PC-9 (cell line): ENCODE measurements at regions of chr1 and their contacts with region 1.

Region 1: GRCh38 chr1:44553771-44554170 is 120.5 kb downstream of the TMEM53 start:
- DNase-seq: peak; percentile 77 to 84
- H3K4me3 ChIP-seq: no peak overlapping the region; the same call in 1 of the 2 replicates
- H3K27ac ChIP-seq: peak overlapping the region; percentile 68
- H3K4me1 ChIP-seq: peaks cover 35% of the 10 kb centered on the region
- H3K27me3 ChIP-seq: no peaks in the 10 kb centered on the region
- CTCF ChIP-seq: no peak

Region 2: GRCh38 chr1:44327679-44328491 is 225.9 kb before region 1 on chr1:
- CTCF ChIA-PET with region 1: interaction called, 3 read pairs
- POLR2A ChIA-PET with region 1: no interaction called
- intact Hi-C with region 1: loop called (anchors 5 kb)
- DNase-seq: peak; percentile 99
- H3K4me3 ChIP-seq: no peak overlapping the region
- H3K27ac ChIP-seq: peak overlapping the region; percentile 72
- H3K4me1 ChIP-seq: peaks cover 45% of the 10 kb centered on the region
- H3K27me3 ChIP-seq: no peaks in the 10 kb centered on the region
- CTCF ChIP-seq: no peak

Region 3: GRCh38 chr1:44354840-44355581 is 198.8 kb before region 1 on chr1 and contains the start of gene ERI3:
- CTCF ChIA-PET with region 1: no interaction called
- POLR2A ChIA-PET with region 1: no interaction called
- intact Hi-C with region 1: no loop called
- DNase-seq: peak; percentile 92 to 98
- H3K4me3 ChIP-seq: peak within 1 kb of the TSS; percentile 99
- H3K27ac ChIP-seq: 0 out of 2 replicates have a peak within 1 kb of the TSS, but pooled peaks have one; percentile 40
- H3K4me1 ChIP-seq: peaks cover 26% of the 10 kb centered on the region; the same call in 1 of the 2 replicates
- H3K27me3 ChIP-seq: no peaks in the 10 kb centered on the region
- CTCF ChIP-seq: no peak
- total RNA-seq, gene ERI3: 120 and 133 TPM in 2 replicates

Region 4: DNA sequence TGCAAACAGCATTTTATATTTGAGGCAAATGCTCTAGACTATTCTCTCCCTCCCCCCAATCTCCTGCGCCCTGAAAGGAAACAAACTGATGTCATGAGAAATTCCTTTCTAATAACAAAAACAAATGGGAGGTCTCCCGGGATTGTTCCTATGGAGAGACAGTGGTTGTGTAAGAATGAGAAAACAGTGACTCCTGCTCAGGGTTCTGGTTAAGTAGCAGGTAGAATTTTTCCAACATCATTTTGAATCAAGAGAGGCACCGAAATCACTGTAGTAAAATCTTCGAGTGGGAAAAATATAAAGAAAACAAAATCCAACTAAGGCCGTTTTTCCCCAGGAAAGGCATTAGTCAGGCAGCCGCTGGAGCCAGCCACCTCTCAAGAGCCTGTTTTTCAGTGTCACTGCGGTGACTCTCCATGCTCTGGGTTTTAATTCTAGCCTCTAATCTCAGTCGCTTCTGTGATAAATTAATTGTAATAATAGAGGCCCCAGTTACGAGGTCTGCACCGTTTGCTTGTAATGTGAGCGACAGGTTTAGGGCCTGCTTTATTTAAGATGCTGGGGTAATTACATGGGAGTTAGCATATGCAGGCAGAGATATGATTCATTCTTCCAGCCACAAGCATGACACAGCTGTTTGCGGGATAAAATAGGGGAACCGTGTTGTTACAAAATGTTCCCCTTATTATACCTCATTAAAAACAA is 68.4 kb before region 1 on chr1:
- CTCF ChIA-PET with region 1: no interaction called
- POLR2A ChIA-PET with region 1: no interaction called
- intact Hi-C with region 1: loop called (anchors 10 kb)
- DNase-seq: peak in 1 of 2 experiments; percentile 30
- H3K4me3 ChIP-seq: no peak overlapping the region
- H3K27ac ChIP-seq: peak overlapping the region; percentile 54
- H3K4me1 ChIP-seq: peaks cover 22% of the 10 kb centered on the region
- H3K27me3 ChIP-seq: no peaks in the 10 kb centered on the region
- CTCF ChIP-seq: no peak

Region 5: DNA sequence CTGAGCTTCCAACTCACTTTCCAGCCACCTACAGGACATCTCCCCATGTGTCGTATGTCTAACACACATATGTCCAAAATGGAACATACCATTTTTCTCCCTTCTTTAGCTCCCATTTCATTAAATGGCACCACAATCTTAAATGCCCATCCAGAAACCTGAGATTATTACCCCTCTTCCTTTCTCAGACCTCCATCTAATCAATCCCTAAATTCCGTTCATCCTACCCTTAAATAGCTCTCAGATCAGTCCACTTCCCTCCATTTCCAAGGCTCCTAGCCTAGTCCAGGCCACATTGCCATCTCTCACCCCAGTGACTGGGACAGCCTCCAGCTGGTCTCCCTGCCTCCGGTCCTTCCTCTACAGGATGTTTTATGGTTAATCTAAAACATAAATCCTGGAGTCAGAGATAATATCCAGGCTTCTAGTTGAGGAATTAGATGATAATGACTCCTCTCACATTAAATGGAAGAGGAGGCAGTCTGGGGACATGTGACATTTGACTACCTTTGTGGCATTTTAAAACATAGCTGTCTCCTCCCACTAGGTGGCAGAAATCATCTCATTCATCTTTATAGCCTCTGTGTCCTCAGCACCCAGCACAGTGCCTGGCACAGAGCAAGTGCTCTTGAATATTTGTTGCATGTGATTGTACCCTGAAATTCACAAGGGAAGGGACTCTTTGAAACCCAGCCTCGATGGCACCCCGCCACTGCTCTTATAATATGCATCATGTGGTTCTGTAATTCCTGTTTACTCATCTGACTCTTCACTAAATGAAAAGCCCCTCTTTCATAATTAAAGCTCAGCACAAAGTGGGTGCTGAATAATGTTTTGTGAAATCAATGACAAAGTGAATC is 18.2 kb after region 1 on chr1:
- CTCF ChIA-PET with region 1: interaction called, 10 read pairs
- POLR2A ChIA-PET with region 1: interaction called, 3 read pairs
- intact Hi-C with region 1: no loop called
- DNase-seq: no peak
- H3K4me3 ChIP-seq: no peak overlapping the region
- H3K27ac ChIP-seq: no peak overlapping the region
- H3K4me1 ChIP-seq: peaks cover 18% of the 10 kb centered on the region
- H3K27me3 ChIP-seq: no peaks in the 10 kb centered on the region
- CTCF ChIP-seq: peak; percentile 76

Region 6: GRCh38 chr1:44584167-44584566 is 30.4 kb after region 1 on chr1:
- CTCF ChIA-PET with region 1: interaction called, 12 read pairs
- POLR2A ChIA-PET with region 1: no interaction called
- intact Hi-C with region 1: no loop called
- DNase-seq: no peak
- H3K4me3 ChIP-seq: no peak overlapping the region
- H3K27ac ChIP-seq: no peak overlapping the region
- H3K4me1 ChIP-seq: 0 out of 2 replicates have a peak, but pooled peaks cover 8% of the 10 kb centered on the region
- H3K27me3 ChIP-seq: no peaks in the 10 kb centered on the region
- CTCF ChIP-seq: no peak

Region 7: DNA sequence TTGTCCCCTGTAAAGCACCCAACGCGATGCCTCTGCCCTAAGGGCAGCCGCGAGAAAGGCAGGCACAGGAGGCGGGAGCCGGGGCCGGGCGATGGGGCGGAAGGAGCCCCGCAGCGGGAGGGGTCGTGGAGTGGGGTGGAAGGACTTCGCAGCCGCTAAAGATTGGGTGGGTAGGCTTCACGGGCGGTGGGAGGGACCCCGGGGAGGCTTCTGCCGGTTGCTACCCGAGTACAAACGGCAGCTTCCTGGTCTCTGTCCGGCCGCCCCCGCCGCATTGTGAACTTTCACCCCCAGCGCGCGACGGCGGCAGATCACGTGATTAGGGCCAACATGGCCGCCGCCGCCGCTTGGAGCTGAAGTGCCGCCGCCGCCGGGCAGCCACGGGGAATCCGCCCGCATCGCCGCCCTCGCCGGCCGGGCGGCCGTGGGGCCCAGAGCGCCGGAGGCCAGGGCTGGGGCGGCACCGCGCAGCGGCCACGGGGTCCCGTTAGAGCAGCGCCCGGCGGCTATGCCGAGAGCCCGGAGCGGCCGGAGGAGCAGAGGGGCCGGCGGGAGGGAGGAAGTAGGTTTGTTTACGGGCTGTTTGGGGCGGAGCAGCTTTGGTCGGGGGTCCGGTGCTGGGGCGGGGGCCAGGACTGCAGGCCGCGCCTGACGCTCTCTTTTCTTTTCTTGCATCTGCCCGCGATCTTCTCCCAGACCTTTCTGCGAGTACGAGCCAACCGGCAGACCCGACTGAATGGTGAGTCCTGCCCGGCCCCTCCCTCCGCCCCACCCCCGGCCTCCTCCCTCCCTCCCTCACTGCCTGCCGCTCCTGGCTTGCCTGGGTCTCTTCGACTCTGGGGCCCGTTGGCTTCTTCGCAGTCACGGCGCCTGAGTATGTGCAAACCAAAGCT is 78.1 kb after region 1 on chr1:
- CTCF ChIA-PET with region 1: no interaction called
- POLR2A ChIA-PET with region 1: no interaction called
- intact Hi-C with region 1: loop called (anchors 5 kb)
- DNase-seq: peak; percentile 76 to 90
- H3K4me3 ChIP-seq: peak overlapping the region; percentile 74
- H3K27ac ChIP-seq: peak overlapping the region; percentile 97
- H3K4me1 ChIP-seq: peaks cover 44% of the 10 kb centered on the region
- H3K27me3 ChIP-seq: no peaks in the 10 kb centered on the region
- CTCF ChIP-seq: no peak